Endothelial cell of umbilical vein (primary cell): ENCODE measurements at regions of chr10 and their contacts with region 1.

Region 1: GRCh38 chr10:44864637-44865288 is 46.4 kb upstream of the TMEM72 start:
- DNase-seq: peak; percentile 79
- H3K4me3 ChIP-seq: peak overlapping the region; percentile 5 to 46 (median 28)
- H3K27ac ChIP-seq: no peak overlapping the region
- H3K4me1 ChIP-seq: peaks cover 5% of the 10 kb centered on the region
- H3K27me3 ChIP-seq: no peaks in the 10 kb centered on the region
- CTCF ChIP-seq: peak; percentile 98 to 99
- POLR2A ChIP-seq: no peak

Region 2: DNA sequence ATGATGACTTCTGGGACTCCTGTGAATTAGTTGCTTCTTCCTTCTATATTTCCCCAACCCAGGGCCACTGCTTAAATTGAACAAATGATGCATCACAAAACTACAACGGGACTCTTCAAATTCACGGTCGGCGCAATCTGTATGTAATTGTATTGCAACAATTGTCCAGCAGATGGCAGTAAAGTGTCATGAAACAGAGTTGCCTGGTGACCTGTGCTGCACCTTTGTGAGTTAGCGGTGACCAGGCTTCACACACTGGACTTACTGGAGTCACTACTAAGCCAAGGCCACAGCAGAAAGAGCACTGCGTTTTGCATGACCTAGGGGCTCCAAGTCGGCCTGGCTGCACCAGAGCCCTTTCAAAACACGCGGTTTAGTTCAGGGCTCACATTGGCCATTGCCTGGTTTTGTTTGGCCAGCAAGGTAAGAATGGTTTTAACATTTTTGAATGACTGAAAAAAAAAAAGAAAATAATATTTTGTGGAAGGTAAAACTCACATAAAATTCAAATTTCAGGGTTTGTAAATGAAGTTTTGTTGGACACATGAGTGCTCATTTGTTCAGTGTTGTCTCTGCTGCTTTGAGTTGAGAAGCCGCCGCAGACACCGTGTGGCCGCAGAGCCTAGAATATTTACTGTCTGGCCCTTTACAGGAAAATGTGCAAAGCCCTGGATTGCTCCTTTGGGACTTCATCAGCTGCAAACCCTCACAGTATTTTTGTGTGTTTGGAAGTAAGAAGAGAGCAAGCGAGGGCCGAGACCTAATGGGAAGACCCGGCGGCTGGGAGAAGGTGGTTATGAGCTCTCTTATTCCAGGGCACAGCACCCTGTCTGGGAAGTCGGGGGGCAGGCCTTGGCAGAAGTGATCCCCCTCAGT is 1192.9 kb before region 1 on chr10:
- CTCF ChIA-PET with region 1: interaction called, 11 read pairs
- POLR2A ChIA-PET with region 1: no interaction called
- dilution Hi-C with region 1: no loop called
- intact Hi-C with region 1: loop called (anchors 1 kb)
- DNase-seq: peak; percentile 69
- H3K4me3 ChIP-seq: no peak overlapping the region
- H3K27ac ChIP-seq: no peak overlapping the region
- H3K4me1 ChIP-seq: no peaks in the 10 kb centered on the region
- H3K27me3 ChIP-seq: peaks cover 9 to 12% of the 10 kb centered on the region in 2 experiments
- CTCF ChIP-seq: peak; percentile 47 to 64
- POLR2A ChIP-seq: no peak

Region 3: GRCh38 chr10:44046605-44047004 is 818.2 kb before region 1 on chr10:
- CTCF ChIA-PET with region 1: no interaction called
- POLR2A ChIA-PET with region 1: no interaction called
- dilution Hi-C with region 1: no loop called
- intact Hi-C with region 1: loop called (anchors 10 kb)
- DNase-seq: peak; percentile 29
- H3K4me3 ChIP-seq: no peak overlapping the region
- H3K27ac ChIP-seq: no peak overlapping the region
- H3K4me1 ChIP-seq: peaks cover 2% of the 10 kb centered on the region
- H3K27me3 ChIP-seq: peaks cover 1 to 12% of the 10 kb centered on the region in 2 experiments
- CTCF ChIP-seq: peak in 1 of 2 donors; percentile 12
- POLR2A ChIP-seq: no peak

Region 4: GRCh38 chr10:44310762-44311562 is 553.8 kb before region 1 on chr10:
- CTCF ChIA-PET with region 1: interaction called, 4 read pairs
- POLR2A ChIA-PET with region 1: no interaction called
- dilution Hi-C with region 1: no loop called
- intact Hi-C with region 1: loop called (anchors 2 kb)
- DNase-seq: peak; percentile 53
- H3K4me3 ChIP-seq: no peak overlapping the region
- H3K27ac ChIP-seq: no peak overlapping the region
- H3K4me1 ChIP-seq: no peaks in the 10 kb centered on the region
- H3K27me3 ChIP-seq: no peaks in the 10 kb centered on the region
- CTCF ChIP-seq: peak; percentile 85 to 87
- POLR2A ChIP-seq: no peak

Region 5: DNA sequence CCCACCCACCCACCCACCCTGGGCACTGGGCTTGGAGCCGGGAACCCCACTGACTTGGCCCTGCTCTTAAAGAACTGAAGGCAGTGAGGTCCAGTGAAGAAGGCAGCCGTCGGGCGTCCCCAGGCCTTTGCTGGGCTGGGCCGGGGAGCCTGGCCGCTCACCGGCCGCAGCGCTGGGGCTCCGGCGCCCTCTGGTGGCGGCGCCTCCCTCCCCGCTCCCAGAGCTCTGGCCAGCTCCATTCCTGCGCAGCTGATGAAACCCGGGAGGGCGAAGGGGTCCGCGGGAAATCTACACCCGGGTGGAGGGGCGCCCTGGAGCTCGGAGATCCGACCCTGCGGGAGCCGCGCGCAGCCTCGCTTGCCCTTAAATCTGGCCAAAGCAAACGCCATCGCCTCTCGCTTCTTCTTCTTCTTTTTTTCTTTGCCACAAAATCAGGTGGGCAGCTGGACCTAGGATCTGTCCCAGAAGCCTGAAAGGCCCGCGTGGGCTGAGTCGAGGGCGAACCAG is 478.2 kb before region 1 on chr10:
- CTCF ChIA-PET with region 1: interaction called, 46 read pairs
- POLR2A ChIA-PET with region 1: no interaction called
- dilution Hi-C with region 1: no loop called
- intact Hi-C with region 1: loop called (anchors 2 kb)
- DNase-seq: peak; percentile 37
- H3K4me3 ChIP-seq: no peak overlapping the region
- H3K27ac ChIP-seq: no peak overlapping the region
- H3K4me1 ChIP-seq: no peaks in the 10 kb centered on the region
- H3K27me3 ChIP-seq: peaks cover 15 to 25% of the 10 kb centered on the region in 2 experiments
- CTCF ChIP-seq: peak; percentile 81 to 94
- POLR2A ChIP-seq: no peak

Region 6: DNA sequence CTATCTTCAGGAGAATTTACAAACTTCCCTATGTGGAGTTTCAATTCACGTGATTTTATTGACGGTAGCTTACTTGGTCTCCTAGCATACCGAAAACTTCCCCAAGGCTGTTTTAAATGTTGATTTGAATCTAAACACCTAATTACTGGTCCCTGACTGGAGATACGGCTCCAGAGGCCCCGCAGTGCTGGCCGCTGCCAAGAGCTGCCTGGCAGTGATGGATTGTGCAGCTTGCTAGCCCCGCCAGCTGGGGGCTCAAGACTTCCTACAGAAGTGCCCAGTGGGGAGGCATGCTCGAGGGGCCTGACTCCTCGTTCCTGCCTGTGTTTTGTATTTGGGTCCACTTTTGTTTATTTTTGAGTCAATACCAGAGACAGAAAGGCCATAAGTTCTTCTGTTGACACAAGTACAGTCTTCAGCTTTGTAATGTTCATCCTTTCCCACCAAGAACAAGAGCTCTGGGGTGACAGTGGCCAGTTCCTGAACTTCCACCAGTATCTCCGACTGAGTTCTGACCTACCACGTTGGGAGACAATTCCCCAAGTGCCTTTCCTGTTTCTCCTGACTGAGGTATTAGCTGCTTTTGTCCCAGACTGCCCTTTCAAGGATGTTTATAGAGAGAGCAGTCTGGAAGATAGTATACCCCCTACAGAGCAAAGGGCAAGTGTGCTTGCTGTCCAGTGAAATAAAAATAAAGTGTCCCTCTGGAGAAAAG is 399.2 kb before region 1 on chr10:
- CTCF ChIA-PET with region 1: no interaction called
- POLR2A ChIA-PET with region 1: no interaction called
- dilution Hi-C with region 1: no loop called
- intact Hi-C with region 1: loop called (anchors 1 kb)
- DNase-seq: no peak
- H3K4me3 ChIP-seq: no peak overlapping the region
- H3K27ac ChIP-seq: no peak overlapping the region
- H3K4me1 ChIP-seq: no peaks in the 10 kb centered on the region
- H3K27me3 ChIP-seq: no peaks in the 10 kb centered on the region
- CTCF ChIP-seq: no peak
- POLR2A ChIP-seq: no peak

Region 7: GRCh38 chr10:44878706-44879530 is 14.2 kb after region 1 on chr10:
- CTCF ChIA-PET with region 1: interaction called, 11 read pairs
- POLR2A ChIA-PET with region 1: no interaction called
- dilution Hi-C with region 1: no loop called
- intact Hi-C with region 1: no loop called
- DNase-seq: peak; percentile 80
- H3K4me3 ChIP-seq: peak overlapping the region in 2 of 3 experiments; percentile 14 to 35
- H3K27ac ChIP-seq: no peak overlapping the region
- H3K4me1 ChIP-seq: peaks cover 7% of the 10 kb centered on the region
- H3K27me3 ChIP-seq: peaks cover 2 to 3% of the 10 kb centered on the region in 2 experiments
- CTCF ChIP-seq: no peak
- POLR2A ChIP-seq: no peak